ENCODE measurements at regions of chr7 and their contacts with region 1.

Region 1: DNA sequence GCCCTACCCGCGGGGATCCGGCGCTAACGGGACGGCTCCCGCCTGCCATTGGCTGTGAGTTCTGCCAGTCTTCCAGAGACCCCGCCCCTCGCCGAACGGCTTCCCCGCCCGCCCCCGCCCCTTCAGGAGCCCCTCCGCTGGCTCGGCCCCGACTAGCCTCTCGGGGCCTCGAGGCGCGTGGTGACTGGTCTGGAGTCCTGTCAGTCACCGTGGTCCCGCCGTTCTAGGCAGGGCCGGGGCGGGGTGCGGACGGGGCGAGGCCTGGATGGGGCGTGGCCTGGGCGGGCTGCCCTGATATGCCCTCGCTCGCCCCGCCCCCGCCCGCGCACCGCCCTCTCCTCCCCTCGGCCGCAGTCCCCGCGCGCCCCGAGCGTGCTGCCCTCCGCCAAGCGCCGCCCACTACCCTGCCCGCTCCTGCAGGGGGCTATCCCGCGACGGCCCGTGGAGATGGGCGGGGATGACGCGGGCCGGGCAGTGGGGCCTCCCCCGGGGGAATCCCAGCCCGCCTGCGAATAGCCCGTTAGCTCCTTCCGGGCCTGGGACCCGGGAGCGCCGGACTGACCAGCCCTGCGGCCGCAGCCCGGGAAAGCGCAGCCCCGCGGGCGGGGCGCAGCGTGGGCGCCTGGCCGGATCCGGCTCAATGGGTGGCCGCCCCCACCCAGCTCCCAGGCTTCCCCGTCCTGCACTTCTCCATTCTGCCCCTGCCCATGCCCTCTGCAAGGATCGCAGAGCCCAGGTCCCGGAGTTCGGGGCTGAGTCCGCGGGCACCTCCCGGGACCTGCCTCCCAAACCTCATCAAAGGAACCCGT is 450 bp upstream of the HIP1 start:
- DNase-seq: peak; percentile 100
- ATAC-seq: peak; percentile 99

Region 2: DNA sequence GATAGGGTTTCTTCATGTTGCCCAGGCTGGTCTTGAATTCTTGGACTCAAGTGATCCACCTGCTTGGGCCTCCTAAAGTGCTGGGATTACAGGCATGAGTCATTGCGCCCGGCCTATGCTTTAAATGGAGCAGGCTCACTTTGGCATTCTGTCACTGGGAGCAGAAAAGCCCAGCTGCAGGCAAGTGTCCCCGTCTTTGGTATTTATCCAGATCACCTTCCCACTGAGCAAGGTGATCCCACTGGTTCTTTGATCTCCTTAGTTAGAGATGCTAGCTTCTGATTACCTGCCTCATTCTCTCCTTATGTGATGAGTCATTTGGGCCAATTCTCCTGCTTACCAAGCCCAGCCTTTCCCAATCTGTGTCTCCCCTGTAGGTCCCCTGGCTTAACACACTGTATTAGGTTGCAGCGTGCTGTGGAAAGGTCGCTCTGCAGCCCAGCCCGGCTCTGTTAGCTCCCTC is 207.8 kb before region 1 on chr7:
- intact Hi-C with region 1: loop called (anchors 10 kb)
- DNase-seq: no peak
- ATAC-seq: no peak

Region 3: GRCh38 chr7:75611548-75612178 is 127.5 kb before region 1 on chr7:
- intact Hi-C with region 1: loop called (anchors 5 kb)
- DNase-seq: peak; percentile 85
- ATAC-seq: peak; percentile 98

Region 4: GRCh38 chr7:75642810-75643486 is 96.2 kb before region 1 on chr7:
- intact Hi-C with region 1: loop called (anchors 10 kb)
- DNase-seq: no peak
- ATAC-seq: no peak

Region 5: GRCh38 chr7:75696263-75697037 is 42.7 kb before region 1 on chr7:
- intact Hi-C with region 1: no loop called
- DNase-seq: no peak
- ATAC-seq: no peak